ENCODE measurements at regions of chr9 and their contacts with region 1.

Region 1: DNA sequence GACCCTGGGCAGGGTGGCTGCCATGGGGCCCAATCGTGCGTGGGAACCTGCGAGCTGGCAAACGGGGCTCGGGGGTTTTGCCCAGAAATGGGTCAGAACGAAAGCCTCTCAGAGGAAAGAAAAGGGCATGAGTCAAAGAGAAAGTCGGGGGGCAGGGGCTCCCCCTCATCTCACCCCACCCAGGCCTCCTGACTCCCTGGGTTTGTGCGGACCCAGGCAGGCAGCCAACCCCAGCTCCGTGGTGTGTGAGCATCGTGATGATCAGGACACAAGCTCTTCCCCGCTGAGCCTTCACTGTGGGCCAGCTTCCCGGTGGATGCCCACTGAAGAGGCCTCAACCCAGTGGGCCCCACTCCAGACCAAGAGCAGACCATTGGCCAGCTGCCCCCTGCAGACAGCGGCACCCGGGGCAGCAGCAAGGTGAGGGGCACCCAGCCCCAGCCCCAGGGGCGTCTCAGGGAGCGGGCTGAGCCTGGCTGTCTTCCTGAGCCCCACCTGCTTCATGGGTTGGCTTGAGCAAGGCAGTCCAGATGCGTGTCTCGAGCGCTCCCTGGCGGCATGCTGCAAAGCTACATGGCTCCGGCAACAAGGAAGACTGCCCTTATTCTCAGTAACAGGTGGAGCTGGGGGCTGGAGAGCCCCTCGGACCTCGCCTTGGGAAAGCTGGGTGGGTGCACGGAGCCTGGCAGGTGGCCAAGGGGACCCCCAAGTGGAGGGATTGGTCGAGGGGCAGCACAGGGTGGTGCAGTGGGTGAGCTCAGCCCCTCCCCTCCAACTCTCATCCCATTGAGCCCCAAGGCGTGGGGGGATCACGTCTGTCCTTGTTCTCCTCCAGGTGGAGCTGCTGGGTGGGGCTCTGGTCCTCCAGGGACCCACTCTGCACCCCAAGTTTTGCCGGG is 3.2 kb upstream of the FUT7 start:
- DNase-seq: peak; percentile 96
- ATAC-seq: peak; percentile 80
- H3K4me3 Mint-ChIP-seq: peak overlapping the region; percentile 66
- H3K27ac Mint-ChIP-seq: peak overlapping the region; percentile 83
- H3K4me1 Mint-ChIP-seq: peaks cover 36% of the 10 kb centered on the region
- H3K27me3 Mint-ChIP-seq: no peaks in the 10 kb centered on the region

Region 2: GRCh38 chr9:136282272-136282861 is 752.7 kb before region 1 on chr9:
- CTCF ChIA-PET with region 1: no interaction called
- POLR2A ChIA-PET with region 1: no interaction called
- intact Hi-C with region 1: no loop called
- DNase-seq: peak; percentile 42
- ATAC-seq: no peak
- H3K4me3 Mint-ChIP-seq: no peak overlapping the region
- H3K27ac Mint-ChIP-seq: no peak overlapping the region
- H3K4me1 Mint-ChIP-seq: peaks cover 4% of the 10 kb centered on the region
- H3K27me3 Mint-ChIP-seq: peaks cover 2% of the 10 kb centered on the region

Region 3: GRCh38 chr9:136865735-136866103 is 169.4 kb before region 1 on chr9:
- CTCF ChIA-PET with region 1: no interaction called
- POLR2A ChIA-PET with region 1: no interaction called
- intact Hi-C with region 1: no loop called
- DNase-seq: no peak
- ATAC-seq: no peak
- H3K4me3 Mint-ChIP-seq: peak overlapping the region; percentile 81
- H3K27ac Mint-ChIP-seq: peak overlapping the region; percentile 38
- H3K4me1 Mint-ChIP-seq: peaks cover 16% of the 10 kb centered on the region
- H3K27me3 Mint-ChIP-seq: no peaks in the 10 kb centered on the region

Region 4: GRCh38 chr9:136949817-136950655 is 85.1 kb before region 1 on chr9:
- CTCF ChIA-PET with region 1: interaction called, 23 read pairs
- POLR2A ChIA-PET with region 1: interaction called, 3 read pairs
- intact Hi-C with region 1: loop called (anchors 1 kb)
- DNase-seq: peak; percentile 98
- ATAC-seq: peak; percentile 98
- H3K4me3 Mint-ChIP-seq: peak overlapping the region; percentile 78
- H3K27ac Mint-ChIP-seq: peak overlapping the region; percentile 78
- H3K4me1 Mint-ChIP-seq: peaks cover 2% of the 10 kb centered on the region
- H3K27me3 Mint-ChIP-seq: no peaks in the 10 kb centered on the region

Region 5: DNA sequence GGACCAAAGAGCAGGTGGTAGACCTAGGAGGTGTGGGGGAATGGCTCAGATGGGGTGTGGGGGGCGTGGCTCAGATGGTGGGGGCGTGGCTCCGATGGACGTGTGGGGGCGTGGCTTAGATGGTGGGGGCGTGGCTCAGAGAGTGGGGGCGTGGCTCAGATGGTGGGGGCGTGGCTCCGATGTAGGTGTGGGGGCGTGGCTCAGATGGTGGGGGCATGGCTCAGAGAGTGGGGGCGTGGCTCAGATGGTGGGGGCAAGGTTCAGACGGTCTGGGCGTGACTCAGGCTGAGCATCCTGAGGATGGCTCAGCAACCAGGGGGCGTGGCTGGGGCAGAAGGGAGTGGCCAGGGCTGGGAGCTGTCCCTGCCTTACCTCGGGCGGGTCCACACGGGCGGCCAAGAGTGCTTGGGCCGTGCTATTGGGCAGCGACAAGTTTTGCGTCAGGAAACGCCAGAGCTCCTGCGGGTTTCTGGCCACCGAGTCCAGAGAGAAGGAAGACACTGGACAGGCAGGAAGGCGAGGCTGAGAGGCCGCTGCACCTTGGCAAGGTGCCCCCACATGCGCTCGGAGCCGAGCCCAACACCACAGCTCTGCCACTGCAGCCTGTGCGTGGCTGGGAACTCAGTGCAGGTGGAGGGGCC is 13.0 kb before region 1 on chr9:
- CTCF ChIA-PET with region 1: interaction called, 10 read pairs
- POLR2A ChIA-PET with region 1: no interaction called
- intact Hi-C with region 1: no loop called
- DNase-seq: peak; percentile 93
- ATAC-seq: peak; percentile 97
- H3K4me3 Mint-ChIP-seq: no peak overlapping the region
- H3K27ac Mint-ChIP-seq: no peak overlapping the region
- H3K4me1 Mint-ChIP-seq: peaks cover 3% of the 10 kb centered on the region
- H3K27me3 Mint-ChIP-seq: no peaks in the 10 kb centered on the region

Region 6: GRCh38 chr9:137070201-137070905 is 35.2 kb after region 1 on chr9 and contains the start of gene SAPCD2:
- CTCF ChIA-PET with region 1: interaction called, 32 read pairs
- POLR2A ChIA-PET with region 1: no interaction called
- intact Hi-C with region 1: no loop called
- DNase-seq: peak; percentile 92
- ATAC-seq: peak; percentile 91
- H3K4me3 Mint-ChIP-seq: peak within 1 kb of the TSS; percentile 71
- H3K27ac Mint-ChIP-seq: peak within 1 kb of the TSS; percentile 71
- H3K4me1 Mint-ChIP-seq: peaks cover 9% of the 10 kb centered on the region
- H3K27me3 Mint-ChIP-seq: no peaks in the 10 kb centered on the region
- total RNA-seq, gene SAPCD2: 6.4 to 8.8 TPM

Measured in activated CD4-positive, alpha-beta T cell treated with anti-CD3 and anti-CD28 coated beads for 36 hours (primary cell).